PC-9 (cell line): ENCODE measurements at regions of chr2 and their contacts with region 1.

Region 1: GRCh38 chr2:96801005-96801785 is 14.9 kb upstream of the CNNM3 start:
- DNase-seq: peak; percentile 65 to 80
- H3K4me3 ChIP-seq: no peak overlapping the region
- H3K27ac ChIP-seq: no peak overlapping the region
- H3K4me1 ChIP-seq: no peaks in the 10 kb centered on the region
- H3K27me3 ChIP-seq: no peaks in the 10 kb centered on the region
- CTCF ChIP-seq: peak; percentile 97

Region 2: GRCh38 chr2:96195410-96196066 is 605.7 kb before region 1 on chr2:
- CTCF ChIA-PET with region 1: no interaction called
- POLR2A ChIA-PET with region 1: interaction called, 16 read pairs
- intact Hi-C with region 1: no loop called
- DNase-seq: no peak
- H3K4me3 ChIP-seq: no peak overlapping the region
- H3K27ac ChIP-seq: no peak overlapping the region
- H3K4me1 ChIP-seq: no peaks in the 10 kb centered on the region
- H3K27me3 ChIP-seq: no peaks in the 10 kb centered on the region
- CTCF ChIP-seq: no peak

Region 3: GRCh38 chr2:96554293-96555145 is 246.7 kb before region 1 on chr2:
- CTCF ChIA-PET with region 1: no interaction called
- POLR2A ChIA-PET with region 1: no interaction called
- intact Hi-C with region 1: loop called (anchors 1 kb)
- DNase-seq: peak; percentile 55 to 67
- H3K4me3 ChIP-seq: no peak overlapping the region
- H3K27ac ChIP-seq: no peak overlapping the region
- H3K4me1 ChIP-seq: peaks cover 30% of the 10 kb centered on the region
- H3K27me3 ChIP-seq: no peaks in the 10 kb centered on the region
- CTCF ChIP-seq: peak; percentile 99

Region 4: GRCh38 chr2:96602330-96602823 is 198.8 kb before region 1 on chr2:
- CTCF ChIA-PET with region 1: no interaction called
- POLR2A ChIA-PET with region 1: no interaction called
- intact Hi-C with region 1: loop called (anchors 5 kb)
- DNase-seq: peak in 1 of 2 experiments; percentile 34
- H3K4me3 ChIP-seq: no peak overlapping the region
- H3K27ac ChIP-seq: no peak overlapping the region
- H3K4me1 ChIP-seq: no peaks in the 10 kb centered on the region
- H3K27me3 ChIP-seq: no peaks in the 10 kb centered on the region
- CTCF ChIP-seq: peak; percentile 38; the same call in 1 of the 2 replicates

Region 5: GRCh38 chr2:96618604-96619283 is 182.5 kb before region 1 on chr2:
- CTCF ChIA-PET with region 1: no interaction called
- POLR2A ChIA-PET with region 1: no interaction called
- intact Hi-C with region 1: loop called (anchors 5 kb)
- DNase-seq: no peak
- H3K4me3 ChIP-seq: no peak overlapping the region
- H3K27ac ChIP-seq: no peak overlapping the region
- H3K4me1 ChIP-seq: no peaks in the 10 kb centered on the region
- H3K27me3 ChIP-seq: no peaks in the 10 kb centered on the region
- CTCF ChIP-seq: no peak

Region 6: GRCh38 chr2:96665083-96665569 is 136.1 kb before region 1 on chr2:
- CTCF ChIA-PET with region 1: no interaction called
- POLR2A ChIA-PET with region 1: no interaction called
- intact Hi-C with region 1: loop called (anchors 1 kb)
- DNase-seq: peak; percentile 76 to 99
- H3K4me3 ChIP-seq: peak overlapping the region; percentile 23; the same call in 1 of the 2 replicates
- H3K27ac ChIP-seq: peak overlapping the region; percentile 82
- H3K4me1 ChIP-seq: peaks cover 19% of the 10 kb centered on the region
- H3K27me3 ChIP-seq: no peaks in the 10 kb centered on the region
- CTCF ChIP-seq: no peak

Region 7: DNA sequence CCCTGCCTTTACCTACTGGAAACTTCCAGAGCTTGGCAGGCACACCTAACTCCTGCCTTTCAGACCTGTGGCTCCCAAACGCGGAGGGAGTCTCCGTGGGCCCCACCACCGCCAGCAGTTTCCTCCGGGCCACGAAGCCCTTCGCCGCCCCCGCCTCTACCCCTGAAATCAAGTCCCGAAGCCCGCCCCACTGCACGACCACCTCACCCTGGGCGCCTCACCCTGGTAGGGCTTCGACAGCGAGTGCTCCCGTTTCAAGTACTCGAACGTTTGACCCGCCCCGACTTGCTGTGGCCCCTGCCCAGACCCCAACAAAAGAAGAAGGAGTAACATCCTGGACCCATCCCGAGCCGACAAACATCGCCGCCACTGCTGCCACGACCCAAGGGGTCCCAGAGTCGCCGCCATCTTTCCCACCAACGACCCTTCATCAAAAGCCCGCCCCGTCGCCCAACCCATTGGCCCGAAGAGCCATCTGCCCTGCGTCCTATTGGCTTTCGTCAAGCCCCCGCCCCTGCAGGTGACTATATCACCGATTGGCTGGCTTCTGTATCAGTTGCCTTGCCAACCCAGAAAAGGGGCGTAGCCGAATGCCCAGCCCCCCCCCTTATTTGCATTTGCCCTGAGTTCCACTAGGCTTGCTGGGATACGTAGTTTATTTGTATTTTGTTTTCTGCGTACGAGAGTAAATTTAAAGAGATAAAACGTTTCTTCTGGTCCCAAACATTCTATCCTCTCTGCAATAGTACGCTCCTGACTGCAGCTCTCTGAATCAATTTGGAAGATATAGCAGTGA is 61.4 kb before region 1 on chr2 and contains the start of gene LMAN2L:
- CTCF ChIA-PET with region 1: no interaction called
- POLR2A ChIA-PET with region 1: no interaction called
- intact Hi-C with region 1: loop called (anchors 2 kb)
- DNase-seq: peak; percentile 95 to 98
- H3K4me3 ChIP-seq: peak within 1 kb of the TSS; percentile 77
- H3K27ac ChIP-seq: no peak within 1 kb of the TSS
- H3K4me1 ChIP-seq: peaks cover 18% of the 10 kb centered on the region
- H3K27me3 ChIP-seq: no peaks in the 10 kb centered on the region
- CTCF ChIP-seq: no peak
- total RNA-seq, gene LMAN2L: 13.2 and 15.6 TPM in 2 replicates

Region 8: GRCh38 chr2:96856776-96857673 is 55.8 kb after region 1 on chr2:
- CTCF ChIA-PET with region 1: no interaction called
- POLR2A ChIA-PET with region 1: no interaction called
- intact Hi-C with region 1: no loop called
- DNase-seq: no peak
- H3K4me3 ChIP-seq: peak overlapping the region; percentile 72
- H3K27ac ChIP-seq: no peak overlapping the region
- H3K4me1 ChIP-seq: peaks cover 10% of the 10 kb centered on the region
- H3K27me3 ChIP-seq: no peaks in the 10 kb centered on the region
- CTCF ChIP-seq: no peak